Stomach (tissue), 19 donors: ENCODE measurements at regions of chr2 and their contacts with region 1.

Region 1: GRCh38 chr2:199979832-199980628 is 24.6 kb downstream of the MAIP1 start:
- DNase-seq: peak; percentile 87 to 92
- H3K4me3 ChIP-seq: peak overlapping the region in 1 of 4 donors; percentile 11
- H3K27ac ChIP-seq: no peak overlapping the region
- H3K4me1 ChIP-seq: peaks cover 0 to 22% (median 10%) of the 10 kb centered on the region in 4 donors
- H3K27me3 ChIP-seq: no peaks in the 10 kb centered on the region
- CTCF ChIP-seq: peak in 5 of 7 experiments; percentile 41 to 96 (median 81)
- EP300 ChIP-seq: no peak
- POLR2A ChIP-seq: no peak

Region 2: DNA sequence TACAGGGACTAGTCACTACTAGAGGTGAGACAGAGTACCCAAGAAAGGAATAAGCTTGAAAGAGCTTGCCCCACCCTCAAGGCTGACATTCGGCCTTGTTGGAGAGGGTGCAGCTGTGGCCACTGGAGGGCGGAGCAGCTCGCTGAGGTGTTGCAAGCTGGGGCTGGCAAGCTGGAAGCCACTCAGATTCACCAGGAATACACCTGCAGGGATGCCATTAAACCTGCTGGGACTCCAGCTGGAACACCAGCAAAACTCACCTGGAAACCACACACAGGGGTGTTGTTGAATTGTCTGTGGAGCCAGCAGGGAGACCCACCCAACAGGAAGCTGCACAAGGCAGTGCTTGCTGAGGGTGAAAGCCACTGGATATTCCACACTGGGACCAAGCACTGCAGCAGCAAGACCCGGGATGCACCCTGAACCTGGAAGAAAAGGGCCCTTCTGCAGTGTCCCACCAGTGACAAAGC is 503.7 kb after region 1 on chr2:
- intact Hi-C with region 1: loop called (anchors 5 kb)
- DNase-seq: peak; percentile 66 to 85
- H3K4me3 ChIP-seq: no peak overlapping the region
- H3K27ac ChIP-seq: no peak overlapping the region
- H3K4me1 ChIP-seq: peaks cover 0 to 15% (median 4%) of the 10 kb centered on the region in 4 donors
- H3K27me3 ChIP-seq: no peaks in the 10 kb centered on the region
- CTCF ChIP-seq: peak in 4 of 7 experiments; percentile 21 to 44 (median 30)
- EP300 ChIP-seq: no peak
- POLR2A ChIP-seq: no peak